Mammary epithelial cell (primary cell): ENCODE measurements at regions of chr5 and their contacts with region 1.

Region 1: GRCh38 chr5:14871210-14872069 is at the start of gene ANKH:
- DNase-seq: peak; percentile 78
- H3K4me3 ChIP-seq: peak within 1 kb of the TSS; percentile 63 to 82 (median 72)
- H3K27ac ChIP-seq: peak within 1 kb of the TSS; percentile 26
- H3K4me1 ChIP-seq: peaks cover 19% of the 10 kb centered on the region
- H3K27me3 ChIP-seq: no peaks in the 10 kb centered on the region
- CTCF ChIP-seq: peak in 1 of 2 donors; percentile 12
- total RNA-seq, gene ANKH: 77.8 to 138 TPM

Region 2: DNA sequence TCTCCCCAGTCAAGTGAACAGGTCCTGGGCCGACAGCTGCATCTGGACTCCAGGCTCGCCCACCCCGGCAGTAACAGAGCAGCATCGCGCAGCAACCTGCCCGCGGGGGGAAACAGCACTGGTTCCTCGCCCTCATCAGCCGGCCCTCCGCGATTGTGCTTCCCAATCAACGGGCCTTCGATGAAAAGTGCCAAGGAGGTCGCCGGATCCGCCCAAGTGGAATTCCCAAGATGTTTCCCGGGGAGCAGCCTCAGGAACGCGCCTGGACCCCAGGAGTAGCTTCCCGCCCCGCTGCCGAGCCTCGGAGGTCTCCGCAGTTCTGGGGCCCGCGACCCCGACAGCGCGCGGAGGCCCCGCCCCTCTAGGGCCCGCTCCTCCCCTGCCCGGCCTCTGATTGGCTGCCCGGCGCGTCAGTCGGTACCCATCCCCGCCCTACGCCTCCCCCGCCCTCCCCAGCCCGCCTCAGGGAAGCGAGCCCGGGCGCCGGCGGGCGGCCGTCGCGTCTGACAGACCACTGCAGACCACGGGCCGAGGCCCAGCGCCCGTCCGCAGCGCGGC is 290.0 kb before region 1 on chr5 and contains the start of gene OTULINL:
- CTCF ChIA-PET with region 1: no interaction called
- dilution Hi-C with region 1: no loop called
- in situ Hi-C with region 1: no loop called
- intact Hi-C with region 1: no loop called
- DNase-seq: peak; percentile 56
- H3K4me3 ChIP-seq: peak within 1 kb of the TSS; percentile 48 to 58 (median 56)
- H3K27ac ChIP-seq: no peak within 1 kb of the TSS
- H3K4me1 ChIP-seq: peaks cover 9% of the 10 kb centered on the region
- H3K27me3 ChIP-seq: peaks cover 16% of the 10 kb centered on the region
- CTCF ChIP-seq: no peak
- total RNA-seq, gene OTULINL: 0.33 to 5.1 TPM

Region 3: DNA sequence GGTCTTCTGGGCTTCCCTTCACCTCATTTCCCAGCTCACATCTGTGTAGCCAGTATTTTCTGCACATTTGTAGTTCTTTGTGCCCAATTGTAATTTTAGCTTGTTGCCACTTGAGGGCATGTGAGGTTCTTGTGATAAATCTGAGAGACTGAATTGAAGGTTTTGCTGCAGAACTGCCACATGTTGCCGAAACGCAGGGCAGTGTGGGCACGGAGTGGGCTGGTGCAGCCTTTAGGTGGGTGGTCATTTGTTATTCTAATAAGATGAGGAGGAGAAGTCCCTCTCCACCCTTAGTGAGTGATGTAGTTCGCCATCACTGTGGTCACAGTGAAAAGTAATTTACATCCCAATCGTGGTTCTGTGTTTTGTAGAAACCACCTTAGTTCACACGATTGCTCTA is 185.7 kb before region 1 on chr5:
- CTCF ChIA-PET with region 1: no interaction called
- dilution Hi-C with region 1: no loop called
- in situ Hi-C with region 1: no loop called
- intact Hi-C with region 1: loop called (anchors 5 kb)
- DNase-seq: peak; percentile 53
- H3K4me3 ChIP-seq: no peak overlapping the region
- H3K27ac ChIP-seq: peak overlapping the region; percentile 30
- H3K4me1 ChIP-seq: peaks cover 20% of the 10 kb centered on the region
- H3K27me3 ChIP-seq: no peaks in the 10 kb centered on the region
- CTCF ChIP-seq: peak; percentile 52 to 74

Region 4: DNA sequence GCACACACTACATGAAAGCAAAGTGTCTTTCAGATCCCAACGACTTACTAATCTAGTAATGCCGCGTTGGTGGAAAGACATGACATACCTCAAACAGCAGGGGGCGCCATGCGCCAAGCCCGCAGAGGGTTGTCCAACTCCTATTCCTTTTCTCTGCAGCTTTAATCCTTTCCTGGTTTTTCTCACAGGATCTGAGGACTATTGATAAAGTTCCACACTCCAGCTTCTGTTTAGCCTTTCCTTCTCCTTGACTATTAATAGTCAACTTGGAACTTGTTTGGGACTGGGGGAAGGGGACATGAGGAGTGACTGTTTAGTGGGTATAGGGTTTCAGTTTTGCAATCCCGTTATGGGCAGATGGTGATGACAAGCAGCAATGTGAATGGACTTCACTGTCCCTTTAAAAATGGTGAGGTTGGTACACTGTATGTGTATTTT is 144.0 kb before region 1 on chr5:
- CTCF ChIA-PET with region 1: no interaction called
- dilution Hi-C with region 1: no loop called
- in situ Hi-C with region 1: no loop called
- intact Hi-C with region 1: loop called (anchors 1 kb)
- DNase-seq: peak; percentile 58
- H3K4me3 ChIP-seq: no peak overlapping the region
- H3K27ac ChIP-seq: no peak overlapping the region
- H3K4me1 ChIP-seq: no peaks in the 10 kb centered on the region
- H3K27me3 ChIP-seq: no peaks in the 10 kb centered on the region
- CTCF ChIP-seq: peak; percentile 94 to 95

Region 5: DNA sequence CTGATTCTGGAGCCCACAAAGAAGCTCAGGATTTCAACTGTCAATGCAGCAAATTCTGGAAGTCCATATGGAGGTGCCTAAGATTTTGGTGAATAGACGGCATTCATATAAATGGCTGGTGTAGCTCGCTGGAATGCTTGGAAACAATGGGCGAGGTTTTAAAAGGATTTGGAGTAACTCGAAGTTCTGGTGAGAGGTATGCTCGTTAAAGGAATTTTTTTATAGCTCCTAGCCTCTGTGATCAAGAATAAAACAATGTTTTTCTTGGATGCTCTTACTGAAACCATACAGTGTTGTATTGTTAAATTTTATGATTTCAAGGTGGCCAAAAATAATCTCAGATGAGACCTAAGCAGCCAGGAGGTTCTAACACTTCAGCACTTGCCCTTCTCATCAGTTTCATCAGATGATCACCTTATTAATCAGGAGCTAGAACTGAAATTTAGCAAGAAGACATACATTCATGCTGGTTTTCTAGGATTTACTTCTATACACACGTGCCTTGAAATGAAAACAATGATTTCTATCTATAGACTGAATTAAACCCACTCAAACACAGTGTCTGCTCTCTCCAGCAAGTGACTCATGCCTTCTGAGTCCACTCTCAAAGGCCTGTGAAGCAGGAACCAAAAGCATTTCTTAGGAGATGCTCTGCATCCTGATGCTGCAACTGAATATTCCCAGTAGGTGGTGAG is 127.7 kb before region 1 on chr5:
- CTCF ChIA-PET with region 1: no interaction called
- dilution Hi-C with region 1: no loop called
- in situ Hi-C with region 1: no loop called
- intact Hi-C with region 1: loop called (anchors 5 kb)
- DNase-seq: peak; percentile 77
- H3K4me3 ChIP-seq: no peak overlapping the region
- H3K27ac ChIP-seq: peak overlapping the region; percentile 30
- H3K4me1 ChIP-seq: peaks cover 43% of the 10 kb centered on the region
- H3K27me3 ChIP-seq: no peaks in the 10 kb centered on the region
- CTCF ChIP-seq: no peak